GM18951 (cell line): ENCODE measurements at regions of chr14 and their contacts with region 1.

Region 1: GRCh38 chr14:31902002-31902401 is 175.1 kb upstream of the ARHGAP5 start:
- POLR2A ChIP-seq: no peak

Region 2: GRCh38 chr14:31159682-31160296 is 742.2 kb before region 1 on chr14:
- in situ Hi-C with region 1: no loop called
- POLR2A ChIP-seq: no peak

Region 3: DNA sequence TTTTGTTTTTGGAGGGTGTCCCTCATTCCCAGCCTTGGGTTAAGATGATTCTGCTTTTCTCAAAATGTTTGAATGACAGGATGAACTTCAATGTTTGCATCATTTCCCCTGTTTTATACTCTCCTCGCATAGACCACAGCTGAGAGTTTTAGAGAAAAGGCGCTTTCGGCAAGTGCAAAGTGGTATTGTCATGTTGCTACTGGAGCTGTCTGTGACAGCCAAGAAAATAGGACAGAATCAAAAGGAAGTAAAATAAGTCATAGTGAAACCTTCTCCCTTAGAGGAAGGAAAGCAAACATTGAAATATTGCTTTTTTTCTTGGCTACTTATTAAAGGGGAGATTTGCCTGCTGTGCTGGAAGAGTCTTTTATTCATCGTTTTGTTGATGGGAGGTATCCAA is 141.6 kb after region 1 on chr14:
- in situ Hi-C with region 1: no loop called
- POLR2A ChIP-seq: no peak

Region 4: GRCh38 chr14:32224737-32225377 is 322.9 kb after region 1 on chr14:
- in situ Hi-C with region 1: loop called (anchors 25 kb)
- POLR2A ChIP-seq: no peak